GM13976 (cell line): ENCODE measurements at regions of chr5 and their contacts with region 1.

Region 1: GRCh38 chr5:55691265-55692105 is 20.6 kb downstream of the SLC38A9 start:
- DNase-seq: peak; percentile 53
- CTCF ChIP-seq: peak; percentile 32

Region 2: GRCh38 chr5:55176176-55176818 is 515.2 kb before region 1 on chr5:
- in situ Hi-C with region 1: loop called (anchors 25 kb)
- DNase-seq: peak; percentile 29
- CTCF ChIP-seq: no peak

Region 3: GRCh38 chr5:55344392-55344992 is 347.0 kb before region 1 on chr5:
- in situ Hi-C with region 1: loop called (anchors 25 kb)
- DNase-seq: peak; percentile 17
- CTCF ChIP-seq: peak; percentile 59